OCI-LY7 (cell line): ENCODE measurements at regions of chr5 and their contacts with region 1.

Region 1: GRCh38 chr5:119340597-119341218 is 15.1 kb upstream of the TNFAIP8 start:
- DNase-seq: peak; percentile 96
- H3K4me3 ChIP-seq: peak overlapping the region; percentile 70
- H3K27ac ChIP-seq: peak overlapping the region; percentile 99
- H3K4me1 ChIP-seq: peaks cover 97% of the 10 kb centered on the region
- CTCF ChIP-seq: peak; percentile 43; the same call in 1 of the 2 replicates

Region 2: GRCh38 chr5:118236108-118236849 is 1104.4 kb before region 1 on chr5:
- CTCF ChIA-PET with region 1: no interaction called
- POLR2A ChIA-PET with region 1: interaction called, 3 read pairs
- intact Hi-C with region 1: loop called (anchors 5 kb)
- DNase-seq: peak; percentile 81
- H3K4me3 ChIP-seq: peak overlapping the region; percentile 42
- H3K27ac ChIP-seq: peak overlapping the region; percentile 93
- H3K4me1 ChIP-seq: peaks cover 49% of the 10 kb centered on the region
- CTCF ChIP-seq: no peak

Region 3: DNA sequence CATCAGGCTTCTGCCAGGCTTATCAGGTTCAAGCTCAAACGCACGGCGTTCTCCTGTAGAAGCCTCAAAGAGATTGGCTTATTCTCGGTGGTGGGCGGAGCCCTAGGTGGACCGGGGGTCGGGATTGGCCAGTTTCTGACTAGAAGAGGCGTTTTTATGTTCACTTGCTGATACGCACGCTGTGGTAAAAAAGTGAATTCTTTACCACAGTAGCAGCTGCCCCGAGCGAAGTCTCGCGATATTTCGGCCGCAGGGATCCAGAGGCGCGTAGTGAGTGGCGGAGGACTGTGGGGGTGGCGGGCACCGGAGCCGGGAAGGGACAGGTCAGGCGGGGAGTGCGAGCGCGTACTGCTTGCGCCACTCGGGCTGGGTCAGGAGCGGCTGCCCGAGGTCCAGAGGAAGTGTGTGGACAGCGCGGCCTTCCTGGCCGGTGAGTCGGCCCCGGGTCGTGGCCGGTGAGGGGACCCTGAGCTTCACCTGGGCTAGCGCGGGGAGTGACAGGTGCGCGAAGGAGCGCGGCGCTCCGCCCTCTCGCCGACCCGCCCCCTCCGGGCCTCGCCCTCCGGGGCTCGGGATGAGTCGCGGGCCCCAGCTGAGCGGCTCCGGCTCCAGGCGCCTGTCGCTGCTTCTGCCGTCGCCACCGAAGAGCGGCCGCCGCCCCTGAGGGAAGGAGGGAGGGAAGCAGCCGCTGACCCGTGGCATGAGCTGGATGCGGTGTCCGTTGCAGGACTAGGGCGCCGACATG is 269.7 kb before region 1 on chr5 and contains the start of gene DMXL1:
- CTCF ChIA-PET with region 1: no interaction called
- POLR2A ChIA-PET with region 1: interaction called, 5 read pairs
- intact Hi-C with region 1: loop called (anchors 2 kb)
- DNase-seq: peak; percentile 100
- H3K4me3 ChIP-seq: peak within 1 kb of the TSS; percentile 79
- H3K27ac ChIP-seq: peak within 1 kb of the TSS; percentile 84
- H3K4me1 ChIP-seq: peaks cover 29% of the 10 kb centered on the region
- CTCF ChIP-seq: no peak
- total RNA-seq, gene DMXL1: 43.0 and 76.6 TPM in 2 replicates

Region 4: DNA sequence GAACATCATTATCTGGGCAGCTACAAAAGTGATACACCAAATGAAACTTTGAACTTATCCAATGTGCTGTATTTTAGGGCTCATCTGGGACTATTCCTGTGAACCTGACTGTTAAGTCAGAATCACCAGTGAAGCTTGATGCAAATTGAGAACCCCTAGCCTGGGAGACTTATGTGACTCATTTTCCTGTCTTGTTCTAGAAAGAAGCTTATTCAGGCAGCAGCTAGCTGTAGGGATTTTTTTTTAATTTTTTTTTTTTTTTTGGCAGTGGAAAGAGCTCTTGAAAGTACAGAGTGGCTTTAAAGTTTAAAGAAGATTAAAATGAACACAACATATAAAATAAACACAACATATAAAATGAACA is 66.0 kb before region 1 on chr5:
- CTCF ChIA-PET with region 1: interaction called, 3 read pairs
- POLR2A ChIA-PET with region 1: interaction called, 46 read pairs
- intact Hi-C with region 1: loop called (anchors 1 kb)
- DNase-seq: peak; percentile 58
- H3K4me3 ChIP-seq: peak overlapping the region; percentile 48
- H3K27ac ChIP-seq: peak overlapping the region; percentile 98
- H3K4me1 ChIP-seq: peaks cover 99% of the 10 kb centered on the region
- CTCF ChIP-seq: no peak

Region 5: GRCh38 chr5:119315516-119315949 is 25.2 kb before region 1 on chr5:
- CTCF ChIA-PET with region 1: interaction called, 6 read pairs
- POLR2A ChIA-PET with region 1: interaction called, 286 read pairs
- intact Hi-C with region 1: loop called (anchors 1 kb)
- DNase-seq: peak; percentile 81
- H3K4me3 ChIP-seq: peak overlapping the region; percentile 5
- H3K27ac ChIP-seq: peak overlapping the region; percentile 57
- H3K4me1 ChIP-seq: peaks cover 100% of the 10 kb centered on the region
- CTCF ChIP-seq: peak; percentile 84

Region 6: DNA sequence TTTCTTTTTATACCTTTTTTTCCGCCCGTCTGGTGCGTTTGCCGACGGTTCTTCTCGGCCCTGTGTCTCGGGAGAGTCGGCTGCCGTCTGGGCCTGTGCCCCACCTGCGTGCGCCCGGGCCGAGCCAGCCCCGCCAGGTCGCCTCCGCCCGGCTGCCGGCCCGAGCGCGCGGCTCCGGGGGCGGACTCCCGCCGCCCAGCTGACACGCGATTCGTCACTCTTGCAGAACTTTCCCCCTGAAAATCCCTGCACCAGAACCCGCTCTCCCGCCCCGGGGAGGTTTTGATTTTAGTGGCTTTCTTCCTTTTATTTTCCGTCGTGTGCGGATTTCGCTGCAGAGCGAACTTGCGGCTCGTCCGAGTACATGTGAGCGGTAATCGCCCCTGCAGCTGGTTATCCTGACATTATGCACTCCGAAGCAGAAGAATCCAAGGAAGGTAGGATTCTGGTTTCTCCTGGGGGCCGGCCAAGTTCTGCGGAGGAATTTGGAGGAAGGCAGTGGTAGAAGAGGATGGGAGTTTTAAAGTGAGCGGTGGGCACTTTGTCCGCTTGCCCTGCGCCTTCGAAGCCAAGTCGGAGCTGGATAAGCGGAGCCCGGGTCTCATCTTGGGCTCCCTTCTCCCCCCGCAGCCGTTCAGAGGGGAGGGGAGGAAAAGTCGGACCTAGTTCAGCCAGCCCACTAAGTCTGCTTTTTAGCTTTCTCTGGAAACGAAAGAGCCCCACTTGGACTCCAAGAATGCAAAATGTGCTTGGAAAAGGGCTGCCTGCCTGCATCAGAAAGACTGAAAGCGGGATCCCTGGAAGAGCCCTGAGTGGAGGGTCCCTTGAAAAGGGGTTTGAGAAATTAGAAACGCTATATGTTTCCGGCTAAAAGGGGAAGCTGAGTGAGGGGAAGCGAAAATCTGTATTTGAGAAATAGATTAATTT is 15.2 kb after region 1 on chr5 and contains the start of gene TNFAIP8:
- CTCF ChIA-PET with region 1: interaction called, 10 read pairs
- POLR2A ChIA-PET with region 1: interaction called, 538 read pairs
- intact Hi-C with region 1: loop called (anchors 1 kb)
- DNase-seq: peak; percentile 69
- H3K4me3 ChIP-seq: peak within 1 kb of the TSS; percentile 73
- H3K27ac ChIP-seq: peak within 1 kb of the TSS; percentile 91
- H3K4me1 ChIP-seq: peaks cover 91% of the 10 kb centered on the region
- CTCF ChIP-seq: no peak
- total RNA-seq, gene TNFAIP8: 92.9 and 95.1 TPM in 2 replicates

Region 7: DNA sequence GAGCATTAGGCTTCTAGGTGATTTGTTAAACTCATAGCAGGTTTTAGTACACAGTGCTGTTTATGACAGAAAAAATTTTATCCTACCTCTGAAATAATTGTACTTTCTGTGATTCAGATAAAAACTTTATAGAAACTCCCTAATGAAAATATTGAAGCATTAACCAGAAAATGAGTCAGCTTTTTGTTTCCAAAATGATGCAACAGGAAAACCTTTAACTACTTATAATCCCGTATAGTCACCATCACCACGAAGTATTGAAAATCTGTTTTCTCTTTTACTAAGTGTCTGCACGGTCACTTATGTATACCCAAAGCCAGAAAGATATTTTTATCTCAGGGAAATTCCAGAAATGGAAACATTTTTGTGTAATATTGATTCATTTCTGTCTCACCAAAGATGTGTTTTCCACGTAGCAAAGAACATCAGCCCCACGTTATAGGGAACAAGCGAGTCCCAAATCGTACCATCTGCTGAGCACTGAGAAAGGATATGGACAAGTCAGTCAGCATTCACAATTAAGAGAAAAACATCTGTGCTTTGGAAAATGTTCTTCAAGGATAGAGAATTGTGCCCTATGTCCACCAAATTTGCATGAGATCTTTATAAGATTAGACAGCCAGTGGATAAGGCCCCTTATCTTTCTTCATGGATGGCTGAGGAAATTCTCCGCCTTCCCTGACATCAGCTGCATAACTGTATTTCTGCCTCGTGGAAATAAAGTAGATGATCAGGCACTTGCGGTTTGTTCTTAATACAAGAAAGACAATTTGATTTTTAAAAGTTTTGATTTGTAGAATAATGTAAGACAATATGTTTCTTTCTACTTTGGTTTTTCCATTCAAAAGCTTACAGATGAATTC is 57.0 kb after region 1 on chr5:
- CTCF ChIA-PET with region 1: interaction called, 15 read pairs
- POLR2A ChIA-PET with region 1: interaction called, 9 read pairs
- intact Hi-C with region 1: no loop called
- DNase-seq: no peak
- H3K4me3 ChIP-seq: no peak overlapping the region
- H3K27ac ChIP-seq: no peak overlapping the region
- H3K4me1 ChIP-seq: peaks cover 59% of the 10 kb centered on the region
- CTCF ChIP-seq: no peak